ENCODE measurements at regions of chr10 and their contacts with region 1.

Region 1: GRCh38 chr10:11147722-11148121 is 130.1 kb downstream of the CELF2 start:
- DNase-seq: no peak
- H3K4me3 ChIP-seq: no peak overlapping the region
- H3K27ac ChIP-seq: no peak overlapping the region
- H3K4me1 ChIP-seq: peaks cover 0 to 53% (median 39%) of the 10 kb centered on the region in 4 donors
- H3K27me3 ChIP-seq: no peaks in the 10 kb centered on the region
- CTCF ChIP-seq: no peak
- EP300 ChIP-seq: no peak
- POLR2A ChIP-seq: no peak

Region 2: GRCh38 chr10:11043446-11044127 is 104.1 kb before region 1 on chr10:
- intact Hi-C with region 1: loop called (anchors 1 kb)
- DNase-seq: no peak
- H3K4me3 ChIP-seq: no peak overlapping the region
- H3K27ac ChIP-seq: no peak overlapping the region
- H3K4me1 ChIP-seq: peaks cover 0 to 31% (median 22%) of the 10 kb centered on the region in 4 donors
- H3K27me3 ChIP-seq: no peaks in the 10 kb centered on the region
- CTCF ChIP-seq: no peak
- EP300 ChIP-seq: no peak
- POLR2A ChIP-seq: no peak

Region 3: GRCh38 chr10:12431151-12432101 is 1283.7 kb after region 1 on chr10:
- intact Hi-C with region 1: no loop called
- DNase-seq: peak; percentile 67
- H3K4me3 ChIP-seq: no peak overlapping the region
- H3K27ac ChIP-seq: no peak overlapping the region
- H3K4me1 ChIP-seq: peaks cover 0 to 8% (median 1%) of the 10 kb centered on the region in 4 donors
- H3K27me3 ChIP-seq: no peaks in the 10 kb centered on the region
- CTCF ChIP-seq: no peak
- EP300 ChIP-seq: no peak
- POLR2A ChIP-seq: no peak

Measured in sigmoid colon (tissue), 7 donors.